ENCODE measurements at regions of chr3 and their contacts with region 1.

Region 1: DNA sequence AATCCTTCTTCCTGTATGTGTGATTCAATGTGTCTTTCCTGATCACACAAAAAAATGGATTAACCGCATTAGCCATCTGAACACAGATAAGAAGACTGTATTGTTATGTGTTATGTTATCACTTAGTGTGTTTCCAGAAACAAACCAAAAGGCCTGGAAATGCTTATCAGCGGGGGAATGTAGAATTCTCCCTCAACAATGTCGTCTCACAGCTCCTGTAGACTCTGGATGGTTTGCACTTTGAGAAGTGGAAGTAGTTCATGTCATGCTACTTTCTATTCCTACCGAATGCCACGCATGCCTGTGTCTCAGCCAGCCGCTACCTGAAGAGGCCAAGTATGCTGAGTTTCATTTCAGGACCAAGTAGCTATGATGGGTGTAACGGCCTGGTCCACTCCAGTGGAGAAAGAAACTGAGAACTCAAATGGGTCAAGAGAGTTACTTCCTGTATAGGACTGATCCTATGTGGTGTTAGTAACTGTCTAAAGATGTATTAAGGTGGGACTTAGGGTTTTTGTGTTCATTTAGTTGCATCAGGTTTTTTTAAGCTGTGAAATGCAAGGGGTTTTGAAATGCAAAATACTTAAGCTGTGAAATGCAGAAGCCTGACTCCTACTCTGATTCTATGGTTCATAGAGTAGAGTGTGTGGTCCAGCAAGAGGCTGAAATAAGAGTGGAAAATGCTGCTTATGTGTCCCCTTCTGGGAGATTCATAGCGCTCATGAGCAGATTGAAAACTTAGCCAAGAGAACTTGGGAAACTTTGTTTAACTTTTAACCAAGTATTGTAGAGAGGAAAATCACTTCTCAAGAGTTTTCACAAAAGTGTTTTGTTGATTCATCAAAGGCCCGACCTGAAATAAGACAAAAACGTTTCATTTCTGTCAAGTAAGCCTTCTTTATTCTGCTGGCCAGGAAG is 118.5 kb upstream of the LMOD3 start:
- DNase-seq: peak; percentile 48
- ATAC-seq: peak; percentile 79
- H3K4me3 ChIP-seq: no peak overlapping the region
- H3K27ac ChIP-seq: 0 out of 2 replicates have a peak overlapping the region, but pooled peaks have one; percentile 40
- H3K4me1 ChIP-seq: peaks cover 21% of the 10 kb centered on the region
- H3K27me3 ChIP-seq: no peaks in the 10 kb centered on the region
- CTCF ChIP-seq: no peak
- EP300 ChIP-seq: no peak
- POLR2A ChIP-seq: no peak
- RAD21 ChIP-seq: no peak

Region 2: GRCh38 chr3:68403741-68404140 is 837.2 kb before region 1 on chr3:
- CTCF ChIA-PET with region 1: no interaction called
- POLR2A ChIA-PET with region 1: no interaction called
- RAD21 ChIA-PET with region 1: no interaction called
- SMC1A ChIA-PET with region 1: no interaction called
- in situ Hi-C with region 1: no loop called
- intact Hi-C with region 1: no loop called
- DNase-seq: no peak
- ATAC-seq: no peak
- H3K4me3 ChIP-seq: no peak overlapping the region
- H3K27ac ChIP-seq: no peak overlapping the region
- H3K4me1 ChIP-seq: no peaks in the 10 kb centered on the region
- H3K27me3 ChIP-seq: no peaks in the 10 kb centered on the region
- CTCF ChIP-seq: no peak
- EP300 ChIP-seq: no peak
- POLR2A ChIP-seq: no peak
- RAD21 ChIP-seq: no peak

Region 3: GRCh38 chr3:68653381-68653780 is 587.5 kb before region 1 on chr3:
- CTCF ChIA-PET with region 1: no interaction called
- POLR2A ChIA-PET with region 1: no interaction called
- RAD21 ChIA-PET with region 1: no interaction called
- SMC1A ChIA-PET with region 1: no interaction called
- in situ Hi-C with region 1: no loop called
- intact Hi-C with region 1: no loop called
- DNase-seq: no peak
- ATAC-seq: no peak
- H3K4me3 ChIP-seq: no peak overlapping the region
- H3K27ac ChIP-seq: no peak overlapping the region
- H3K4me1 ChIP-seq: no peaks in the 10 kb centered on the region
- H3K27me3 ChIP-seq: no peaks in the 10 kb centered on the region
- CTCF ChIP-seq: no peak
- EP300 ChIP-seq: no peak
- POLR2A ChIP-seq: no peak
- RAD21 ChIP-seq: no peak

Region 4: GRCh38 chr3:69012800-69013252 is 228.1 kb before region 1 on chr3:
- CTCF ChIA-PET with region 1: no interaction called
- POLR2A ChIA-PET with region 1: no interaction called
- RAD21 ChIA-PET with region 1: no interaction called
- SMC1A ChIA-PET with region 1: no interaction called
- in situ Hi-C with region 1: no loop called
- intact Hi-C with region 1: no loop called
- DNase-seq: no peak
- ATAC-seq: peak; percentile 59
- H3K4me3 ChIP-seq: peak overlapping the region; percentile 87
- H3K27ac ChIP-seq: peak overlapping the region; percentile 64
- H3K4me1 ChIP-seq: peaks cover 7% of the 10 kb centered on the region; the same call in 1 of the 2 replicates
- H3K27me3 ChIP-seq: no peaks in the 10 kb centered on the region
- CTCF ChIP-seq: no peak
- EP300 ChIP-seq: no peak
- POLR2A ChIP-seq: no peak
- RAD21 ChIP-seq: no peak

Region 5: GRCh38 chr3:69120879-69121464 is 119.9 kb before region 1 on chr3:
- CTCF ChIA-PET with region 1: interaction called, 10 read pairs
- POLR2A ChIA-PET with region 1: no interaction called
- RAD21 ChIA-PET with region 1: interaction called, 9 read pairs
- SMC1A ChIA-PET with region 1: interaction called, 15 read pairs
- in situ Hi-C with region 1: no loop called
- intact Hi-C with region 1: no loop called
- DNase-seq: peak; percentile 48
- ATAC-seq: peak; percentile 96
- H3K4me3 ChIP-seq: no peak overlapping the region
- H3K27ac ChIP-seq: no peak overlapping the region
- H3K4me1 ChIP-seq: no peaks in the 10 kb centered on the region
- H3K27me3 ChIP-seq: 0 out of 4 replicates have a peak, but pooled peaks cover 0 to 3% of the 10 kb centered on the region in 2 experiments
- CTCF ChIP-seq: peak; percentile 91 to 98 (median 95); a peak in 5 of 6 replicates
- EP300 ChIP-seq: no peak
- POLR2A ChIP-seq: no peak
- RAD21 ChIP-seq: peak; percentile 85

Region 6: DNA sequence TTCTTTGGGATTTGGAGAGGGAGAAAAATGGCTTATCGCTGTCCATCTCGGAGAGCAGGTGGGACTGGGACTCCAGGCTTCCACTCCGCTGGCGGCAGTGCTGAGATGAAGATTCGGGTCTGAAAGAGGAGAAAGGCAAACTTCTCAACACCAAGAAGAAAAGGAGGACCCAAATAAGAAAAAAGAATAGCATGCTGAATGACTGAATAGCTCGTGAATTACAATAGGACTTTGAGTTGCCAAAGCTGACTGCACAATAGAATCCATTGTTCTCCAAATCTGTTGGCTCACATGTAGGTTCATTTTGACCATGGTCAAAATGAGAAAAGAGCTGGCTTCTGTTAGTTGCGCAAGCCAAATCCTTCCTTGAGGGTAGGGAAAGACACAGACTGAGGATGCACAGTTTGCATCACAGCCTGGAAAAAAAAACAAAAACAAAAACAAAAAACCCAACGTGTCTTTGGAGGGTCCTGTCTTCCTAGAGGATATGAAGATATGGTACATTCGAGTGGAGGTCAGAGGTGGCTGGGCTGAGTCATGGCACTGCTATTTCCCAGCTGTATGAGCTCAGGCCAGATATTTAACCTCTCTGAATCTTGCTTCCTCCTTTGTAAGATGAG is 59.2 kb before region 1 on chr3:
- CTCF ChIA-PET with region 1: interaction called, 12 read pairs
- POLR2A ChIA-PET with region 1: interaction called, 3 read pairs
- RAD21 ChIA-PET with region 1: interaction called, 11 read pairs
- SMC1A ChIA-PET with region 1: interaction called, 9 read pairs
- in situ Hi-C with region 1: no loop called
- intact Hi-C with region 1: no loop called
- DNase-seq: no peak
- ATAC-seq: no peak
- H3K4me3 ChIP-seq: no peak overlapping the region
- H3K27ac ChIP-seq: no peak overlapping the region
- H3K4me1 ChIP-seq: no peaks in the 10 kb centered on the region
- H3K27me3 ChIP-seq: no peaks in the 10 kb centered on the region
- CTCF ChIP-seq: no peak
- EP300 ChIP-seq: no peak
- POLR2A ChIP-seq: no peak
- RAD21 ChIP-seq: no peak

Region 7: GRCh38 chr3:69200384-69201068 is 40.4 kb before region 1 on chr3:
- CTCF ChIA-PET with region 1: interaction called, 23 read pairs
- POLR2A ChIA-PET with region 1: interaction called, 3 read pairs
- RAD21 ChIA-PET with region 1: interaction called, 7 read pairs
- SMC1A ChIA-PET with region 1: interaction called, 17 read pairs
- in situ Hi-C with region 1: no loop called
- intact Hi-C with region 1: loop called (anchors 5 kb)
- DNase-seq: no peak
- ATAC-seq: peak; percentile 38
- H3K4me3 ChIP-seq: no peak overlapping the region
- H3K27ac ChIP-seq: no peak overlapping the region
- H3K4me1 ChIP-seq: peaks cover 10% of the 10 kb centered on the region
- H3K27me3 ChIP-seq: no peaks in the 10 kb centered on the region
- CTCF ChIP-seq: no peak
- EP300 ChIP-seq: no peak
- POLR2A ChIP-seq: no peak
- RAD21 ChIP-seq: no peak

Region 8: DNA sequence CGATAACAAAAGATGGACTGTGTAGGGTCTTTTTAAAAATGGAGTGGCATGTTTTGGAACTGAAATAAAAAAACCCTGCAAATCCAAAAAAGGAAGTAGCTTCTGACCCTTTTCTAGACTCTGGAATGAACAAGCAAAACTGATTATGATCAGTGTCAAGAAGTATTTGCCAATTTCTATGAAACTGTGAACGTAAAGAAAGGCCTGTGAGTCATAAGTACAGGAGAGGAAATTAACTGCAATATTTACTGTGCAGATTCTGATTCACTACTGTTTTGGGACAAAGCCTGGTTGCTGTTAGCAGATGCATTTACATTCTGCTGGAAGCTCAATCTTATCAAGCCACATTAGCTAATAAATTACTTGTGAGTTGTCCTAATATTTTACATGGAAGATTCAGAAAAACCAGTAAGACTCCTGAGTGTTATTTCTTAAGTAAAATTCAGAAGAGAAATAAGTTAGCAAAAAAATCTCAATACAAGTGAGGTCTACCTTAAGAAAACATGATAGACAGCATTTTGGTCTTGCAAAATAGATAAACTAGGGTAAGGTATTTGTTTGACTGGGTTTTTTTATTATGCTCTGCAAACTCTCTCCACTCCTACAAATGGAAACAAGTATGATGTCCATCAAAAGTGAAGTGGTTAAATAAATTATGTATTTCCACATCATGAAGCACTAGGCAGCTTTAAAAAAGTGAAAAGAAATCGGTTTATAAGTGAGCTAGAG is 28.3 kb before region 1 on chr3:
- CTCF ChIA-PET with region 1: interaction called, 12 read pairs
- POLR2A ChIA-PET with region 1: interaction called, 13 read pairs
- RAD21 ChIA-PET with region 1: interaction called, 8 read pairs
- SMC1A ChIA-PET with region 1: interaction called, 23 read pairs
- in situ Hi-C with region 1: no loop called
- intact Hi-C with region 1: no loop called
- DNase-seq: no peak
- ATAC-seq: peak; percentile 92
- H3K4me3 ChIP-seq: no peak overlapping the region
- H3K27ac ChIP-seq: no peak overlapping the region
- H3K4me1 ChIP-seq: no peaks in the 10 kb centered on the region
- H3K27me3 ChIP-seq: no peaks in the 10 kb centered on the region
- CTCF ChIP-seq: no peak
- EP300 ChIP-seq: peak; percentile 24 to 27; a peak in 1 of 4 replicates
- POLR2A ChIP-seq: no peak
- RAD21 ChIP-seq: no peak

Region 9: DNA sequence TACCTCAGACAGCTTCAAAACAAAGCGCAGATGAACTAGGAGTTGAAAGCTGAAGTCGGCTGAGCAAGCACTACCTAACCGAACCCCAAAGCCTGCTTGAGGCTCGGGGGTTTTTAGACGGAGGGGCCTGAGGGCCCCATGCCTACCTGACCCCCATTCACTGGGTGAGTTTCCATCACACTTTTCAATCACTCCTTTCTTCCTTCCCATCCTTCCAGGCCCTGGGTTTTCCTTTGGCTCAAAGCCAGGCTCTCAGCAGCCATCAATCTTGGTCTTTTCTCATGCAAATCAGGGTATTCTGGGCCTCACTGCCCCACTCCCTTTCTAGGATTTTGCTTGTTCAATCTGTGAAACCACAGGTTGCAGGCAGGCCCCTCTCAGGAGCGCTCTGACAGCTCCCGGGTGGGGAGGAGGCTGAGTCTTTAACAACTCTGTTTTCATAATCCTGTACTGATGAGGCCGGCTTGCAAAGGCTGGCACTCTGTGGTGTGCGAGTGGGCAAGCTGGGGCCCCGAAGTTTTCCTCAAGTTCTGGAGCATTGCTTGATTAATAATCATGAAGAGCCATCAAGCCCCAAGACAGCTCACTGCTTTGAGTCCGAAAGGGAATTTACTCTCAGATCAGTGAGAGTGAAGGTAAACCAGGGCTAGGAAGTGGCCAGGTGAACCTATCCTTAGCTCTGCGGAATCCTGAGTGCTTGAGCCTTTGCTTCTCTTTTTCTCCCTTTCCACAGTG is 47.4 kb after region 1 on chr3:
- CTCF ChIA-PET with region 1: interaction called, 5 read pairs
- POLR2A ChIA-PET with region 1: interaction called, 4 read pairs
- RAD21 ChIA-PET with region 1: interaction called, 3 read pairs
- SMC1A ChIA-PET with region 1: interaction called, 10 read pairs
- in situ Hi-C with region 1: no loop called
- intact Hi-C with region 1: loop called (anchors 5 kb)
- DNase-seq: no peak
- ATAC-seq: peak; percentile 98
- H3K4me3 ChIP-seq: no peak overlapping the region
- H3K27ac ChIP-seq: no peak overlapping the region
- H3K4me1 ChIP-seq: peaks cover 12% of the 10 kb centered on the region
- H3K27me3 ChIP-seq: no peaks in the 10 kb centered on the region
- CTCF ChIP-seq: no peak
- EP300 ChIP-seq: 0 out of 4 replicates have a peak, but pooled peaks of 1 of the 2 experiments have one; percentile 32
- POLR2A ChIP-seq: no peak
- RAD21 ChIP-seq: no peak